GM12878 (cell line): ENCODE measurements at regions of chr6 and their contacts with region 1.

Region 1: GRCh38 chr6:138987640-138988468 is at the start of gene REPS1:
- DNase-seq: peak; percentile 40
- ATAC-seq: peak; percentile 87
- H3K4me3 ChIP-seq: peak within 1 kb of the TSS; percentile 96
- H3K27ac ChIP-seq: peak within 1 kb of the TSS; percentile 86
- H3K4me1 ChIP-seq: no peaks in the 10 kb centered on the region
- H3K27me3 ChIP-seq: no peaks in the 10 kb centered on the region
- CTCF ChIP-seq: peak; percentile 83 to 93 (median 90)
- EP300 ChIP-seq: no peak
- POLR2A ChIP-seq: peak; percentile 96
- RAD21 ChIP-seq: peak; percentile 68
- polyA plus RNA-seq, gene REPS1: 13.7 to 21.2 TPM

Region 2: GRCh38 chr6:138795809-138796603 is 191.8 kb before region 1 on chr6 and contains the start of gene ECT2L:
- CTCF ChIA-PET with region 1: no interaction called
- POLR2A ChIA-PET with region 1: no interaction called
- RAD21 ChIA-PET with region 1: no interaction called
- SMC1A ChIA-PET with region 1: no interaction called
- in situ Hi-C with region 1: no loop called
- intact Hi-C with region 1: no loop called
- DNase-seq: no peak
- ATAC-seq: peak; percentile 49
- H3K4me3 ChIP-seq: no peak within 1 kb of the TSS
- H3K27ac ChIP-seq: no peak within 1 kb of the TSS
- H3K4me1 ChIP-seq: no peaks in the 10 kb centered on the region
- H3K27me3 ChIP-seq: no peaks in the 10 kb centered on the region
- CTCF ChIP-seq: no peak
- EP300 ChIP-seq: no peak
- POLR2A ChIP-seq: no peak
- RAD21 ChIP-seq: no peak
- polyA plus RNA-seq, gene ECT2L: not detected

Region 3: DNA sequence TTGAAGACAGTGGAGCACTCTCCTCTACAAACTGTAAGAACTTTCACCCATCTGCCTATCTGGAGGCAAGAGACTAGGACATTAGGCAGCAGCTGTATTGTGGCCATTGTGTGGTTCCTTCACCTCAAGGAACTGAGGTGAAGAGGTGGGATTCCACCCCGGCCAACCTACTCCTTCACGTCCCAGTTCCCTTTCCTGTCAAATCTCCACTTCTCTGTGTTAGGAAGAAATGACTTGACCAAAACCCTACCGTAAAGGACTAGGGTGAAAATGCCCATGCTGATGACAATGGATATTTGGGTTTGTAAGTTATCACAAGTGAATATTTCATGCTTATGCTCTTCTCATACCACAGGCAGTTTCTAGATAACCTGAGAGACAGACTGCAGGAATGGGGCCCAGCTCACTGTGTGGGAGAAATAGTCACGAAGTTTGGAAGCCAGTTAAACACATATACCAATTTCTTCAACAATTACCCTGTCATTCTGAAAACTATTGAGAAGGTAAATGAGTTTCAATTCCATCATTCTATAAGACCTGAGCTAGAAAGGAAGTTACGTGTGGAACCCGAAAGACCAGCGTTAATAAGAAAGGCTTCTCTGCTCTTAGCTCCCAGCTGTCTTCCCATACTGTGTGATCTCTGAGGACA is 105.4 kb before region 1 on chr6:
- CTCF ChIA-PET with region 1: interaction called, 5 read pairs
- POLR2A ChIA-PET with region 1: interaction called, 5 read pairs
- RAD21 ChIA-PET with region 1: interaction called, 12 read pairs
- SMC1A ChIA-PET with region 1: interaction called, 8 read pairs
- in situ Hi-C with region 1: no loop called
- intact Hi-C with region 1: loop called (anchors 2 kb)
- DNase-seq: peak; percentile 74
- ATAC-seq: peak; percentile 91
- H3K4me3 ChIP-seq: peak overlapping the region; percentile 36; the same call in 1 of the 2 replicates
- H3K27ac ChIP-seq: peak overlapping the region; percentile 95
- H3K4me1 ChIP-seq: peaks cover 22% of the 10 kb centered on the region
- H3K27me3 ChIP-seq: no peaks in the 10 kb centered on the region
- CTCF ChIP-seq: no peak
- EP300 ChIP-seq: peak; percentile 79 to 87
- POLR2A ChIP-seq: no peak
- RAD21 ChIP-seq: no peak

Region 4: DNA sequence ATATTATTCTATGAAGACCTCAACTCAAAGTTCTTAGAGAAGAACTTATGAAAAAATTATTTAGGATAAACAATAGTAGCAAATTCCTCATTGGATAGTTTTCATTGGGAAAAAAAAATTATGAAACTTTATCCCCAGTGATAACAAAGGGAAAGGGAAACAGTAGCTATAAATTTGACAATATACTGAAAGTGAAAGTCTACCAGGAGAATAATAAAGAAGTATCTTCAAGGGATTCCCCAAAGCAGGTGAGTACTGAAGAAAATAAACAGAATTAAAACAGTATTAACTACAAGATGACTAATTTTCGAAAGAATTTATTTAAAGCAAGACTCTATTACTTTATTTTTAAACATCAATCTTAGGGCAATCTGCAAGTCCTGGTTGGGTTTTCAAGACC is 56.2 kb before region 1 on chr6:
- CTCF ChIA-PET with region 1: interaction called, 7 read pairs
- POLR2A ChIA-PET with region 1: no interaction called
- RAD21 ChIA-PET with region 1: interaction called, 3 read pairs
- SMC1A ChIA-PET with region 1: interaction called, 11 read pairs
- in situ Hi-C with region 1: no loop called
- intact Hi-C with region 1: no loop called
- DNase-seq: no peak
- ATAC-seq: peak; percentile 69
- H3K4me3 ChIP-seq: no peak overlapping the region
- H3K27ac ChIP-seq: no peak overlapping the region
- H3K4me1 ChIP-seq: no peaks in the 10 kb centered on the region
- H3K27me3 ChIP-seq: no peaks in the 10 kb centered on the region
- CTCF ChIP-seq: no peak
- EP300 ChIP-seq: no peak
- POLR2A ChIP-seq: no peak
- RAD21 ChIP-seq: no peak

Region 5: GRCh38 chr6:138970856-138971425 is 16.9 kb before region 1 on chr6:
- CTCF ChIA-PET with region 1: interaction called, 9 read pairs
- POLR2A ChIA-PET with region 1: interaction called, 21 read pairs
- RAD21 ChIA-PET with region 1: interaction called, 11 read pairs
- SMC1A ChIA-PET with region 1: interaction called, 30 read pairs
- in situ Hi-C with region 1: no loop called
- intact Hi-C with region 1: no loop called
- DNase-seq: no peak
- ATAC-seq: peak; percentile 80
- H3K4me3 ChIP-seq: no peak overlapping the region
- H3K27ac ChIP-seq: no peak overlapping the region
- H3K4me1 ChIP-seq: peaks cover 16% of the 10 kb centered on the region
- H3K27me3 ChIP-seq: no peaks in the 10 kb centered on the region
- CTCF ChIP-seq: no peak
- EP300 ChIP-seq: no peak
- POLR2A ChIP-seq: no peak
- RAD21 ChIP-seq: no peak

Region 6: DNA sequence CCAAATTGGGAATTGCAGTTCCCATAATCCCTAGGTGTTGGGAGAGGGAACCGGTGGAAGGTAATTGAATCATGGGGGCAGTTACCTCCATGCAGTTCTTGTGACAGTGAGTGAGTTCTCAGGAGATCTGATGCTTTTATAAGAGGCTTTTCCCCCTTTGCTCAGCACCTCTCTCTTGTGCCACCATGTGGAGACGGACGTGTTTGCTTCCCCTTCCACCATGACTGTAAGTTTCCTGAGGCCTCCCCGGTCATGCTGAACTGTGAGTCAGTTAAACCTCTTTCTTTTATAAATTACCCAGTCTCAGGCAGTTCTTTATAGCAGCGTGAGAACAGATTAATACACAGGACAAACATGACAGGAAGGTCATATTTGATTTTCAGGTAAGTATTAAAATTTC is 121.7 kb after region 1 on chr6:
- CTCF ChIA-PET with region 1: interaction called, 5 read pairs
- POLR2A ChIA-PET with region 1: no interaction called
- RAD21 ChIA-PET with region 1: interaction called, 6 read pairs
- SMC1A ChIA-PET with region 1: interaction called, 3 read pairs
- in situ Hi-C with region 1: no loop called
- intact Hi-C with region 1: loop called (anchors 5 kb)
- DNase-seq: no peak
- ATAC-seq: peak; percentile 89
- H3K4me3 ChIP-seq: no peak overlapping the region
- H3K27ac ChIP-seq: no peak overlapping the region
- H3K4me1 ChIP-seq: no peaks in the 10 kb centered on the region
- H3K27me3 ChIP-seq: no peaks in the 10 kb centered on the region; a peak in 1 of 4 replicates
- CTCF ChIP-seq: peak; percentile 36 to 54 (median 44); a peak in 5 of 6 replicates
- EP300 ChIP-seq: no peak
- POLR2A ChIP-seq: no peak
- RAD21 ChIP-seq: peak; percentile 67